Activated B cell treated with CpG ODN at 0.5 μM for 24 hours (primary cell): ENCODE measurements at regions of chr1 and their contacts with region 1.

Region 1: GRCh38 chr1:2412519-2413233 is at the start of gene PEX10:
- DNase-seq: peak; percentile 100
- ATAC-seq: peak; percentile 93
- H3K4me3 Mint-ChIP-seq: peak within 1 kb of the TSS; percentile 83
- H3K27ac Mint-ChIP-seq: peak within 1 kb of the TSS; percentile 71
- H3K4me1 Mint-ChIP-seq: peaks cover 45% of the 10 kb centered on the region
- H3K27me3 Mint-ChIP-seq: no peaks in the 10 kb centered on the region
- CTCF ChIP-seq: no peak
- total RNA-seq, gene PEX10: 17.4 and 18.9 TPM in 2 replicates

Region 2: DNA sequence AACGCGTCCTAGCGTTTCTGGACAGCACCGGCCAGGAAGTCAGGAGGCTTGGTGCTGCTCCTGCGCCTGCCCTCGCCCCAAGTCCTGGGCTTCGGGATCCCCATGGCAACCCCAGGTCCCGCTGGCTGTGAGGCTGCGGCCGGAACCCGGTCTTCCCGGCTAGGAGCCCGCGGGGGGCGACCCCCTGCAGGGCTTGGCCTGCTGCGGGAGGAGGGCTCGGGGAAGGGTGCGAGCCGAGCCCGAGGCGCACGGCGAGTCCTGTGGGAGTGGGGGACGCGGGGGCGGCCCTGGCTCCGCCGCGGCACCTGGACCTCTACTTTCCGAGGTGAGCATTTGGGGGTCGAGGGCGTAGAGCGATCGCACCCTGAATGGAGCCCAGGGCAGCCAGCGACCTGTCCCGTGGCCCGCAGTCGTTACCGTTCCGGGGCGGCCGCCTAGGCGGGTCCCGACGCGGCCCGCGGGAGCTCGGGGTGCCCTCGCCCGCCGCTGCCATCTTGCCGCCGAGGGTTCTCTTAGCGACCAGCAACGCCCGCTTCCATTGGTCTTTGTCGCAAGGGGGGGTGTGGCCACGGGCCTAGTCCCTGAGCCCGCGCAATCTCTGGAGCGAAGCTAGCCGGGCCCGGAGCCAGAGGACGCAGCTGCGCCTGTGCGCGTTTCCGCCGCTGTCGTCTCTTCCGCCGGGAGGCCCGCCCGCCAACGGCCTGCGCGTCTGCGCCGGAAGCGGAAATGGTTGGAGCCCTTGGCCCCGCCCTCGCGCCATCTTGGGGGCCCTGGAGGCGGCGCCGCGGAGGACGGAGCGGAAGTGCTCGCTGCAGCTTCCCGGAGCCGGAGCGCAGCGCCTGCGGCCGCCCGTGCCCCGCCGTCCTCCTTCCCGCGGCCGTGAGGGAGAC is 21.4 kb before region 1 on chr1 and contains the starts of genes MORN1 and RER1:
- CTCF ChIA-PET with region 1: no interaction called
- POLR2A ChIA-PET with region 1: interaction called, 14 read pairs
- intact Hi-C with region 1: loop called (anchors 1 kb)
- DNase-seq: peak; percentile 96
- ATAC-seq: peak; percentile 94
- H3K4me3 Mint-ChIP-seq: peak within 1 kb of the TSS; percentile 88
- H3K27ac Mint-ChIP-seq: peak within 1 kb of the TSS; percentile 68
- H3K4me1 Mint-ChIP-seq: peaks cover 52% of the 10 kb centered on the region
- H3K27me3 Mint-ChIP-seq: no peaks in the 10 kb centered on the region
- CTCF ChIP-seq: no peak
- total RNA-seq, gene MORN1: 15.6 and 17.8 TPM in 2 replicates
- total RNA-seq, gene RER1: 102 and 105 TPM in 2 replicates

Region 3: DNA sequence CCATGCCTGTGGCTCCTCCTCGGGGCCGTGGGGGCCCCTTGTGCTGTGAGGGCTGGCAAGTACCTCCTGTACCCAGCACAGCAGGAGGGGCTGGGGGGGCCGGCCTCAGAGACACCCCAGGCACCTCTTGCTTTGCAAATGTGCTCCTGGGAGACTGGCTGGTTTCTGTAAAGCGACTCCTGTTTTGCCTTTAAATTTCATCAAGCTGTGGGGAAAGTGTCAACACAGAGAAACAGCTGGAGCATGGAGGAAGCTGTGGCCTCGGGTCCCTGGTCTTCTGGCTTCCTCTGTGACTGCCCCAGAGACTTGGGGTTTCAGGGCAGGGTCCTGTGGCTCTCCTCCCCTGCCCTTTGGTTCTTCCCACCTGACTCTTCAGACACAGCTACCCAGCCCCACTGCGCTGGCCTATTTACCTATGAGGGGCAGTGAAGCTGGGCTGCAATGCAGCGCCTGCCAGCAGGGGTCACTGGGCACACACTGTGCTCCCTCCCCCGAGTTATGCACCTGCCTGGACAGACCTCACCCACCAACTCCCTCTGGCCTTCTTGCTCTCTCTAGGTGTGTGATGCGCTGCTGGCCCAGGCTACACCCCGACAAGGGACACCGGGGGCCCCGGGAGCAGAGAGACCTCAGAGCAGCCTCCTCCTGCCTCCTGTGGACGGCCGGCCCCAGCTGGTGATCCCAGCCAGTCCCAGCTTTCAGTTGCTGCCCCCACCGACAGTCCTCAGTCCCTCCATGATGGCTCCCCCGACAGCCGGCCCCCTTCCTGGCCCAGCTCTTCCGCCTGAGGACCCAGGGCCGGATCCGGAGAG is 17.3 kb after region 1 on chr1:
- CTCF ChIA-PET with region 1: no interaction called
- POLR2A ChIA-PET with region 1: no interaction called
- intact Hi-C with region 1: no loop called
- DNase-seq: no peak
- ATAC-seq: no peak
- H3K4me3 Mint-ChIP-seq: no peak overlapping the region
- H3K27ac Mint-ChIP-seq: no peak overlapping the region
- H3K4me1 Mint-ChIP-seq: no peaks in the 10 kb centered on the region
- H3K27me3 Mint-ChIP-seq: peaks cover 3% of the 10 kb centered on the region
- CTCF ChIP-seq: no peak

Region 4: GRCh38 chr1:2494323-2494693 is 81.6 kb after region 1 on chr1:
- CTCF ChIA-PET with region 1: no interaction called
- POLR2A ChIA-PET with region 1: interaction called, 5 read pairs
- intact Hi-C with region 1: loop called (anchors 2 kb)
- DNase-seq: no peak
- ATAC-seq: no peak
- H3K4me3 Mint-ChIP-seq: peak overlapping the region; percentile 11
- H3K27ac Mint-ChIP-seq: peak overlapping the region; percentile 68
- H3K4me1 Mint-ChIP-seq: peaks cover 53% of the 10 kb centered on the region
- H3K27me3 Mint-ChIP-seq: no peaks in the 10 kb centered on the region
- CTCF ChIP-seq: no peak

Region 5: GRCh38 chr1:2514863-2515762 is 102.4 kb after region 1 on chr1:
- CTCF ChIA-PET with region 1: no interaction called
- POLR2A ChIA-PET with region 1: no interaction called
- intact Hi-C with region 1: no loop called
- DNase-seq: no peak
- ATAC-seq: no peak
- H3K4me3 Mint-ChIP-seq: no peak overlapping the region
- H3K27ac Mint-ChIP-seq: no peak overlapping the region
- H3K4me1 Mint-ChIP-seq: no peaks in the 10 kb centered on the region
- H3K27me3 Mint-ChIP-seq: no peaks in the 10 kb centered on the region
- CTCF ChIP-seq: no peak

Region 6: DNA sequence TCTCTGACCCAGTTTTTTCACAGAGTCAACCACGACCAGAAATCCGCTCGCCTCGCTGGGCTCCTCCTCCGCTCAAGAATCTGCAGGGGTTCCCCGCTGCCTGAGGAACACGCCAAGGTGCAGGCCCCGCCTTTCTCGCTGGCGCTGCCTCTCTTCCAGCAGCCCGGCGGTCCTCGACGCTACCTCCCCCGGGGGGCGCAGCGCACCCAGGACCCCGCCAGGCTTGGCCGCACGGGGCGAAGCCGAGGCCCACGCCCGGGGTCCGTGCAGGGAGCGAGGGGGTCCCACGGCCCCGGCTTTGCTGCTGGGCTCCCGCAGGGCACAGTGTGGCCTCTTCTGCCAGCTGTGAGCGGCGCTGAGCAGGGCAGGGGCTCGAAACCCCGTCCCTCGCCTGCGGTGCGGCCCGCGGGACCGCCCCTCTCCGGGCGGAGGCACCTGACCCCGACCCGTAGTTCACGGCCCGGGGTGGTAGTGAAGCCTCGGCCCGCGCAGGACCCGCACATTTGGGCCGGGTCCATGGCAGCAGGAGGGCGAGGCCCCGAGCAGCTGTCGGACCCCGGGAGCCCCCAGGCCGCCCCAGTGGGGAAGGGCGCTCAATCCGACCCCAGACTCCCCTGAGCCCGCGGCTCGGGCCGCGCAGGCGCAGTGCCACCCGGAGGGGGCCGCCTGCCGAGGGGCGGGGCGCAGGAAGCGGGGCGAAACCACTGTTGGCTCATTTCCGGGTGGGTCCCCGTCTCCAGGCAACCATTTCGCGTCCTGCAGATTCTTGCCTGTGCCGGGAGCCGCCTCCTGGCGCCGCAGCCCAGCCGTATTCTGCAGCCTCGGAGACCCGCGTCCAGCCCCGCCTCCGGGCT is 230.1 kb after region 1 on chr1:
- CTCF ChIA-PET with region 1: no interaction called
- POLR2A ChIA-PET with region 1: interaction called, 5 read pairs
- intact Hi-C with region 1: loop called (anchors 1 kb)
- DNase-seq: peak; percentile 92
- ATAC-seq: peak; percentile 79
- H3K4me3 Mint-ChIP-seq: peak overlapping the region; percentile 80
- H3K27ac Mint-ChIP-seq: peak overlapping the region; percentile 73
- H3K4me1 Mint-ChIP-seq: peaks cover 11% of the 10 kb centered on the region
- H3K27me3 Mint-ChIP-seq: peaks cover 3% of the 10 kb centered on the region
- CTCF ChIP-seq: no peak

Region 7: DNA sequence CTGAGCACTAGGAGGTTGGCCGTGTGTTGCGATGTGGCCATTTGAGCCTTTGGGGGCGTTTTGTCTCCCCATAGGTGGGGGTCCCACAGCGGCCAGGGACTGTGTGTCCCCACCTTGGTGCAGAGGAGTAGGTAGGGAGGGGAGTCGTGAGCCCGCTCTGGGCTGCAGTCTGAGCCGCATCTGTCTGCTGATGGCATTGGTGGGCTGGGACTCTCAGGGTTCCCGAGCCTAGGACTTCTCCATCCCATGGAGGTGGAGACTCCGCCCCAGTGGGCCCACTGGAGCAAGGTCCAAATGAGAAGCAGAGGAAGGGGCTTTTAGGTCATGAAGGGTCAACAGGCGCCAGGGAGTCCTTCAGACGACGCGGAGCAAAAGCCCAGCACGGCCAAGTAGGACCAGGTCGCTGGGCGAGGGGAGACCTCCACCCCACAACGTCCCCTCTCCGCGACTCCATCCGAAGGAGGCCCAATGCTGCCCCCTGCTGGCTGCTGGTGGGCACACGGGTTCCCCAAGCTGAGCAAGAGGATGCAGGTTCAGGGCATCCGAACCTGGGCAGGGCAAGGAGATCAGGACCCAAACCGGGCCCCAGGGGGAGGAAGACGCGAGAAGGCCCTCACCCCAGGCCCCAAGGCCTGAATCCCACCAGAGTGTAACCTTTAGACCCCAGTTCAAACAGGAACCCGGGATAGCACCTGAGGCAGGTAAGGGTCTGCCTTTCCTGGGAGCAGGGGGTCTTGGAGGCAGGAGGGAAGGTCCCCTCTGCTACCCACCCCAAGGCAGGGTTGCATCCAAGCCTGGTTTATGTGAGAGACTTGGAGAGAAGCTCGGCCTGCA is 373.9 kb after region 1 on chr1:
- CTCF ChIA-PET with region 1: interaction called, 19 read pairs
- POLR2A ChIA-PET with region 1: no interaction called
- intact Hi-C with region 1: no loop called
- DNase-seq: peak; percentile 69
- ATAC-seq: peak; percentile 78
- H3K4me3 Mint-ChIP-seq: no peak overlapping the region
- H3K27ac Mint-ChIP-seq: no peak overlapping the region
- H3K4me1 Mint-ChIP-seq: peaks cover 2% of the 10 kb centered on the region
- H3K27me3 Mint-ChIP-seq: peaks cover 17% of the 10 kb centered on the region
- CTCF ChIP-seq: peak; percentile 72